ENCODE measurements at regions of chr1 and their contacts with region 1.

Region 1: DNA sequence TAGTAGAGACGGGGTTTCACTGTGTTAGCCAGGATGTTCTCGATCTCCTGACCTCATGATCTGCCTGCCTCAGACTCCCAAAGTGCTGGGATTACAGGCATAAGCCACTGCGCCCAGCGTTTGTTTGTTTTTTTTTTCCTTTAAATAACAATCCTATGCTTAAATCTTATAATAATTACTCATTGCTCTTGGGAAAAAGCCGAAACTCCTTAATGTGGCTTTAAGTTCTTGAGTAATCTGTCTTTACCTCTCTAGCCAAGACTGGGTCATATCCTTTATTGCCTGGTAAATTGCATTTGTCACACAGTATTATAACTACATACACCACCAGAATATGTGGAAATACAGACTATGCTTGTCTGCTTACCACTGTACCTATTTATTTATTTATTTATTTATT is 97.1 kb downstream of the MACF1 start:
- DNase-seq: no peak
- ATAC-seq: no peak
- H3K4me3 ChIP-seq: no peak overlapping the region
- H3K27ac ChIP-seq: no peak overlapping the region
- H3K4me1 ChIP-seq: peaks cover 0 to 3% (median 0%) of the 10 kb centered on the region in 12 donors
- H3K27me3 ChIP-seq: no peaks in the 10 kb centered on the region
- CTCF ChIP-seq: no peak
- POLR2A ChIP-seq: no peak

Region 2: GRCh38 chr1:39268112-39268581 is 33.5 kb before region 1 on chr1:
- intact Hi-C with region 1: no loop called
- DNase-seq: peak in 4 of 5 donors; percentile 28 to 62 (median 34)
- ATAC-seq: peak; percentile 30 to 82 (median 72)
- H3K4me3 ChIP-seq: peak overlapping the region in 10 of 12 donors; percentile 7 to 51 (median 39)
- H3K27ac ChIP-seq: peak overlapping the region; percentile 19 to 84 (median 67)
- H3K4me1 ChIP-seq: peaks cover 7 to 77% (median 65%) of the 10 kb centered on the region in 12 donors
- H3K27me3 ChIP-seq: no peaks in the 10 kb centered on the region
- CTCF ChIP-seq: no peak
- POLR2A ChIP-seq: no peak

Region 3: GRCh38 chr1:39370602-39371001 is 69.0 kb after region 1 on chr1:
- intact Hi-C with region 1: no loop called
- DNase-seq: no peak
- ATAC-seq: no peak
- H3K4me3 ChIP-seq: no peak overlapping the region
- H3K27ac ChIP-seq: peak overlapping the region in 1 of 12 donors; percentile 63
- H3K4me1 ChIP-seq: peaks cover 0 to 10% (median 1%) of the 10 kb centered on the region in 12 donors
- H3K27me3 ChIP-seq: no peaks in the 10 kb centered on the region
- CTCF ChIP-seq: no peak
- POLR2A ChIP-seq: no peak

Region 4: DNA sequence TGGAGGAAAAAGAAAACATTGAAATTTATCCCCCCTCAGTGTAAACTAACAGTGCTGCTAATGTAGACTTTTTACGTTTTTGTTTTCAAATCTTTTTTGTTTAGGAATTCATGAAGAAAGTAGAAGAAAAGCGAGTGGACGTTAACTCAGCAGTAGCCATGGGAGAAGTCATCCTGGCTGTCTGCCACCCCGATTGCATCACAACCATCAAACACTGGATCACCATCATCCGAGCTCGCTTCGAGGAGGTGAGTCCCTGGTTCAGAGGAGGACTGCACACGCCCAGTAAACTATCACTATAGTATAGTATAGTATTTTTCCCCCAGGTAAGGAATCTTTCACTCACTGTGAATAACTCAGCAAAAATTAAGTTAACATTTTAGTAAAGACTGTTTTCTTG is 152.0 kb after region 1 on chr1:
- intact Hi-C with region 1: loop called in 1 of 10 experiments (anchors 10 kb)
- DNase-seq: peak in 3 of 5 donors; percentile 53 to 60 (median 55)
- ATAC-seq: peak in 2 of 4 donors; percentile 38 to 57
- H3K4me3 ChIP-seq: no peak overlapping the region
- H3K27ac ChIP-seq: no peak overlapping the region
- H3K4me1 ChIP-seq: peaks cover 0 to 9% (median 0%) of the 10 kb centered on the region in 12 donors
- H3K27me3 ChIP-seq: no peaks in the 10 kb centered on the region
- CTCF ChIP-seq: no peak
- POLR2A ChIP-seq: no peak